CD8-positive, alpha-beta T cell (primary cell): ENCODE measurements at regions of chr16 and their contacts with region 1.

Region 1: DNA sequence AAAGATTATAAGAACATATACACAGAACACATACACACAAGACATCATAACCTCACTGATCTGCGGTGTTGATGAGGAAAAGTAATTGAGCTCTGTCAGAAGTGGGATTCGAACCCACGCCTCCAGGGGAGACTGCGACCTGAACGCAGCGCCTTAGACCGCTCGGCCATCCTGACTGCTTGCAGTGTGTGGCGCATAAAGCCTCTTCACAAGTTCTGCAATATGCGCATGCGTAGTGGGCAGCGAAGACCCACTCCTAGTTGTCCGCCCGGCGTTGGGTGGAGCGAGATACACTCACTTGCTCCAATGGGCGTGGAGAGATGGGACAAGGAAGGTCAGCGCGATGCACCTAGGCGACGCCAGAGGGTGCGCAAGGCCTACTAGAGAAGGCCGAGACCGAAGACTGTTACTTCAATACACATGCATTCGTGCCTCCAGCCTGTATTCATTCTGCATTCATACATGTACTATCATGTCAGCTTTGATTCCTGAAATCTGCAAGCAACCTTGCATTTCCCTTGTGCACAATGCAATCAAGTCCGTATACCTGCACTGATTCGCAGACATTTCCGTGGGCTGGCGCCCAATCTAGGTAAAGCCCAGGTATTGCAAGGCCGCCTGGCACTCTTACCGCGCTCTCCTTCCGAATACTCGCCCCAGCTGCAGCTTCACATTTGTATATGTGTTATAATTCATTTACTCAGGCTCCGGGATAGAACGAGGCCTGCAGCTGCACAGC is 16.1 kb upstream of the PLLP start:
- DNase-seq: peak; percentile 98 to 100 (median 99)
- ATAC-seq: peak; percentile 91
- H3K4me3 ChIP-seq: peak overlapping the region; percentile 57 to 65
- H3K4me3 Mint-ChIP-seq: no peak overlapping the region
- H3K27ac ChIP-seq: peak overlapping the region; percentile 60 to 81
- H3K27ac Mint-ChIP-seq: no peak overlapping the region
- H3K4me1 ChIP-seq: peaks cover 17% of the 10 kb centered on the region
- H3K4me1 Mint-ChIP-seq: peaks cover 25% of the 10 kb centered on the region
- H3K27me3 ChIP-seq: no peaks in the 10 kb centered on the region
- H3K27me3 Mint-ChIP-seq: no peaks in the 10 kb centered on the region
- CTCF ChIP-seq: peak; percentile 82

Region 2: GRCh38 chr16:56519459-56520250 is 780.9 kb before region 1 on chr16 and contains the start of gene BBS2:
- CTCF ChIA-PET with region 1: no interaction called
- POLR2A ChIA-PET with region 1: no interaction called
- intact Hi-C with region 1: no loop called
- DNase-seq: peak; percentile 84 to 96 (median 92)
- ATAC-seq: peak; percentile 83
- H3K4me3 ChIP-seq: peak within 1 kb of the TSS; percentile 94 to 99
- H3K4me3 Mint-ChIP-seq: peak within 1 kb of the TSS; percentile 86
- H3K27ac ChIP-seq: peak within 1 kb of the TSS; percentile 82 to 92
- H3K27ac Mint-ChIP-seq: peak within 1 kb of the TSS; percentile 92
- H3K4me1 ChIP-seq: peaks cover 32% of the 10 kb centered on the region
- H3K4me1 Mint-ChIP-seq: peaks cover 50% of the 10 kb centered on the region
- H3K27me3 ChIP-seq: no peaks in the 10 kb centered on the region
- H3K27me3 Mint-ChIP-seq: no peaks in the 10 kb centered on the region
- CTCF ChIP-seq: no peak
- total RNA-seq, gene BBS2: 60.6 to 62.1 TPM

Region 3: GRCh38 chr16:57084257-57084770 is 216.2 kb before region 1 on chr16:
- CTCF ChIA-PET with region 1: interaction called, 3 read pairs
- POLR2A ChIA-PET with region 1: no interaction called
- intact Hi-C with region 1: loop called in 1 of 2 experiments (anchors 10 kb)
- DNase-seq: peak; percentile 58 to 92 (median 80)
- ATAC-seq: peak; percentile 98
- H3K4me3 ChIP-seq: no peak overlapping the region
- H3K4me3 Mint-ChIP-seq: no peak overlapping the region
- H3K27ac ChIP-seq: peak overlapping the region; percentile 59 to 69
- H3K27ac Mint-ChIP-seq: peak overlapping the region; percentile 92
- H3K4me1 ChIP-seq: peaks cover 11% of the 10 kb centered on the region
- H3K4me1 Mint-ChIP-seq: peaks cover 14% of the 10 kb centered on the region
- H3K27me3 ChIP-seq: no peaks in the 10 kb centered on the region
- H3K27me3 Mint-ChIP-seq: no peaks in the 10 kb centered on the region
- CTCF ChIP-seq: peak; percentile 96

Region 4: GRCh38 chr16:57244767-57245471 is 55.6 kb before region 1 on chr16 and contains the start of gene ARL2BP:
- CTCF ChIA-PET with region 1: interaction called, 12 read pairs
- POLR2A ChIA-PET with region 1: interaction called, 6 read pairs
- intact Hi-C with region 1: loop called (anchors 1 kb)
- DNase-seq: peak; percentile 92 to 98 (median 97)
- ATAC-seq: peak; percentile 95
- H3K4me3 ChIP-seq: peak within 1 kb of the TSS; percentile 68 to 76
- H3K4me3 Mint-ChIP-seq: peak within 1 kb of the TSS; percentile 92
- H3K27ac ChIP-seq: peak within 1 kb of the TSS; percentile 50 to 87
- H3K27ac Mint-ChIP-seq: peak within 1 kb of the TSS; percentile 96
- H3K4me1 ChIP-seq: peaks cover 9% of the 10 kb centered on the region
- H3K4me1 Mint-ChIP-seq: peaks cover 19% of the 10 kb centered on the region
- H3K27me3 ChIP-seq: no peaks in the 10 kb centered on the region
- H3K27me3 Mint-ChIP-seq: no peaks in the 10 kb centered on the region
- CTCF ChIP-seq: no peak
- total RNA-seq, gene ARL2BP: 32.8 to 35.2 TPM

Region 5: DNA sequence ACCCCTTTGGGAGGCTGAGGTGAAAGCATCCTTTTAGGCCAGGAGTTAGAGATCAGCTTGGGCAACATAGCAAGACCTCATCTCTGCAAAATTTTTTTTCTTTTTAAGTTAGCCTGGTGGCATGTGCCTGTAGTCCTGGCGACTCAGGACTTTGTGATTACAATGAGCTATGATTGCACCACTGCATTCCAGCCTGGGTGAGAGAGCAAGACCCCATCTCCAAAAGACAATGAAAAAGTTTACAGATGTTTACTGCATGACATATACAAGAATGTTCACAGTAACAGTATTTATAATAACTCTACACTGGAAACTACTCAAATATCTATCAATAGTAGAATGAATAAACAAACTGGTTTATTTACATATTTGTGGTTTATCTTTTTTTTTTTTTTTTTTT is 24.9 kb after region 1 on chr16:
- CTCF ChIA-PET with region 1: no interaction called
- POLR2A ChIA-PET with region 1: no interaction called
- intact Hi-C with region 1: no loop called
- DNase-seq: no peak
- ATAC-seq: no peak
- H3K4me3 ChIP-seq: no peak overlapping the region
- H3K4me3 Mint-ChIP-seq: no peak overlapping the region
- H3K27ac ChIP-seq: no peak overlapping the region
- H3K27ac Mint-ChIP-seq: no peak overlapping the region
- H3K4me1 ChIP-seq: no peaks in the 10 kb centered on the region
- H3K4me1 Mint-ChIP-seq: no peaks in the 10 kb centered on the region
- H3K27me3 ChIP-seq: no peaks in the 10 kb centered on the region
- H3K27me3 Mint-ChIP-seq: no peaks in the 10 kb centered on the region
- CTCF ChIP-seq: no peak

Region 6: GRCh38 chr16:57358527-57359095 is 58.1 kb after region 1 on chr16 and contains the start of gene CCL22:
- CTCF ChIA-PET with region 1: no interaction called
- POLR2A ChIA-PET with region 1: no interaction called
- intact Hi-C with region 1: no loop called
- DNase-seq: peak in 1 of 9 experiments; percentile 18
- ATAC-seq: no peak
- H3K4me3 ChIP-seq: no peak within 1 kb of the TSS
- H3K4me3 Mint-ChIP-seq: no peak within 1 kb of the TSS
- H3K27ac ChIP-seq: no peak within 1 kb of the TSS
- H3K27ac Mint-ChIP-seq: no peak within 1 kb of the TSS
- H3K4me1 ChIP-seq: no peaks in the 10 kb centered on the region
- H3K4me1 Mint-ChIP-seq: no peaks in the 10 kb centered on the region
- H3K27me3 ChIP-seq: no peaks in the 10 kb centered on the region
- H3K27me3 Mint-ChIP-seq: no peaks in the 10 kb centered on the region
- CTCF ChIP-seq: no peak
- total RNA-seq, gene CCL22: not detected

Region 7: DNA sequence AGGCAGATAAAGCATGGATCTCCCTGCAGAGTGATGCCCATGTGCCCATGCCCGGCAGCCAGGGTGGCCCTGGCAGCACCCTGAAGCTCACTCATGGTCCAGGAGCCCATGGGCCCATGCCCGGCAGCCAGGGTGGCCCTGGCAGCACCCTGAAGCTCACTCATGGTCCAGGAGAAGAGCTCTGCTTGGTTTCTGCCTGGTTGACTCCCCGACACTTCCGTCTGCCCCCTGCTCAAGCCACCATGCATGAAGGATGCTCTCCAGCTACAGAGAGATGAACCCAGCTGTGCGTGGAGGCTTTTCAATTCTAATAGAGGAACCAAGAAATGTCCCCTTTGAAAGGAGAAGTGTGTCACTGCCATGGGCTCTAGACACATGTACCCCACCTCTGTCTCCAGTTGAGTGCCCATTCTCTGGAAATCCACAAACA is 112.8 kb after region 1 on chr16:
- CTCF ChIA-PET with region 1: interaction called, 147 read pairs
- POLR2A ChIA-PET with region 1: interaction called, 19 read pairs
- intact Hi-C with region 1: loop called (anchors 1 kb)
- DNase-seq: peak in 1 of 9 experiments; percentile 22
- ATAC-seq: no peak
- H3K4me3 ChIP-seq: no peak overlapping the region
- H3K4me3 Mint-ChIP-seq: no peak overlapping the region
- H3K27ac ChIP-seq: no peak overlapping the region
- H3K27ac Mint-ChIP-seq: no peak overlapping the region
- H3K4me1 ChIP-seq: peaks cover 18% of the 10 kb centered on the region
- H3K4me1 Mint-ChIP-seq: peaks cover 9% of the 10 kb centered on the region
- H3K27me3 ChIP-seq: no peaks in the 10 kb centered on the region
- H3K27me3 Mint-ChIP-seq: peaks cover 4% of the 10 kb centered on the region
- CTCF ChIP-seq: no peak

Region 8: DNA sequence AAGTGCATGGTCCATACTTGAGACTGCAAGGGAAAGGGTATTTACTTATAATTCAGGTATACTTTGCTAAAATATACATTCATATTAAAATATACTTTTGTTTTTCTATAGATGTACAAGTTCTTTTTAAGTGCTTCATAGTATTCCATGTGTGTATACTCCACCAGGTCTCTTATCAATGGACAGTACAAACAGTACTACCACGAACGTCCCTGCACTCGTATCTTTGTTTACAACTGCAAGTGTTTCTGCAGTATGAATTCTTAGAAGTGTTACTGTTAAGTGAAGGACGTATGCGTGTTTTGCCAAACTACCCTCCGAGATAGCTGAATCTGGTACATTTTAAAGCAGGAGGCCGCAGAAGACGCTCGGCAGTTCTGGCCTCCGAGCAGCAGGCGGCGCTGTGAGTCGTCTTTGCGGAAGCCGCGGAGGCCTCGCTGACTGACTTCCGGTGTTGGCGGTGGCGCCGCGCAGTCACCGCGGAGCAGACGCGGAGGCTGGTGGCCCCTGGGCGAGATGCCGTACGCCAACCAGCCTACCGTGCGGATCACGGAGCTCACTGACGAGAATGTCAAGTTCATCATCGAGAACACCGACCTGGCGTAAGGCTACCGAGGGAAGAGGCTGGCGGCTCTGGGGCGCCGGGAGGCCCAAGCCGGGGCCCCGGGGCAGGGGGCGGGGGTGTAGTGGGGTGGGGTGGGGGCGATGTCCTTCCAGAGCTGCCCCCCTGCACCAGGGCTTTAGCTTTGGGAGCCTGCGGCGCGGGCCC is 161.8 kb after region 1 on chr16 and contains the start of gene POLR2C:
- CTCF ChIA-PET with region 1: interaction called, 4 read pairs
- POLR2A ChIA-PET with region 1: no interaction called
- intact Hi-C with region 1: loop called in 1 of 2 experiments (anchors 1 kb)
- DNase-seq: peak; percentile 90 to 98 (median 94)
- ATAC-seq: peak; percentile 97
- H3K4me3 ChIP-seq: peak within 1 kb of the TSS; percentile 83 to 85
- H3K4me3 Mint-ChIP-seq: peak within 1 kb of the TSS; percentile 99
- H3K27ac ChIP-seq: peak within 1 kb of the TSS; percentile 49 to 62
- H3K27ac Mint-ChIP-seq: peak within 1 kb of the TSS; percentile 98
- H3K4me1 ChIP-seq: peaks cover 21% of the 10 kb centered on the region
- H3K4me1 Mint-ChIP-seq: peaks cover 35% of the 10 kb centered on the region
- H3K27me3 ChIP-seq: no peaks in the 10 kb centered on the region
- H3K27me3 Mint-ChIP-seq: no peaks in the 10 kb centered on the region
- CTCF ChIP-seq: peak; percentile 95
- total RNA-seq, gene POLR2C: 101 to 112 TPM

Region 9: DNA sequence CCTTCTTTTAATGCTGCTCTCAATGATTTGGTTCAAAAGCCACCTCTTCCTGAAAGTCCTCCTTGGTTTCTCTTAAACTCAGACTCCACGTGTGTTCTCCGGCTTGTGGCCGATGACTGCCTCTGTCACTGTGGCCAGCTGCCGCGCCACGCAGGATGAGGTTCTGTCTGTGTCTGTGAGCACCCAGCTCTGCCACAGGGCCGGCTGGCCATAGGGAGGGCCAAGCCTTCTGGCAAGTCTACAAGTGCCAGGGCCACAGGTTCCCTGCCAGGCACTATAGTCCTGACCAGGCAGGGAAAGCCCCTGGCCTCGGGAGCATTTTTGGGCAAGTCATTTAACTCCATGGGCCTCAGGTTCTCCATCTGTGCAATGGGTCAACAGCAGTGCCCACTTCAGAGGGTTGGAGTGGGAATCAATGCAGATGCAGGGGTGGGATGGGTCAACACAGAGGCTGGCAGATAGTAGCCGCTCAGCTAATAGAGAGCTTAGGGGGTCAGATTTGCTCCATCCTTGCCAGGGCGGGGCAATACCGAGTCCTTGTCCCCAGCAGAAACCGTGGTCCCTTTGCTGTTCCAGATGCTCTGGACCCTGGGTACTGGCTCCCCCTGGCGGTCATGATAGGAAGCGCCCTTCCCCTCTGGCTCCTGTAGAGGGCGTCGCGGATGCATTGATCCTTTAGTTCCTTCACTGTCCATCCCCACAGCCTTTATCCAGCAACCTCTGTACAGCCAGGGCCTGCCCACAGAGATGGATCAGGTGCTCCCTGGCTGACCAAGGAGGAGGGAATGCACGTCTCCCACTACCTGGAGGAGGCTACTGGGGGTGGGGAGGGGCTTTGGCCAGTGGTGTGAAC is 348.3 kb after region 1 on chr16:
- CTCF ChIA-PET with region 1: no interaction called
- POLR2A ChIA-PET with region 1: no interaction called
- intact Hi-C with region 1: loop called in 1 of 2 experiments (anchors 2 kb)
- DNase-seq: peak; percentile 77 to 94 (median 86)
- ATAC-seq: peak; percentile 84
- H3K4me3 ChIP-seq: peak overlapping the region in 1 of 2 experiments; percentile 53
- H3K4me3 Mint-ChIP-seq: peak overlapping the region; percentile 29
- H3K27ac ChIP-seq: peak overlapping the region in 1 of 2 experiments; percentile 69
- H3K27ac Mint-ChIP-seq: peak overlapping the region; percentile 64
- H3K4me1 ChIP-seq: peaks cover 29% of the 10 kb centered on the region
- H3K4me1 Mint-ChIP-seq: peaks cover 37% of the 10 kb centered on the region
- H3K27me3 ChIP-seq: no peaks in the 10 kb centered on the region
- H3K27me3 Mint-ChIP-seq: no peaks in the 10 kb centered on the region
- CTCF ChIP-seq: peak; percentile 100